PC-3 (cell line): ENCODE measurements at regions of chr7 and their contacts with region 1.

Region 1: DNA sequence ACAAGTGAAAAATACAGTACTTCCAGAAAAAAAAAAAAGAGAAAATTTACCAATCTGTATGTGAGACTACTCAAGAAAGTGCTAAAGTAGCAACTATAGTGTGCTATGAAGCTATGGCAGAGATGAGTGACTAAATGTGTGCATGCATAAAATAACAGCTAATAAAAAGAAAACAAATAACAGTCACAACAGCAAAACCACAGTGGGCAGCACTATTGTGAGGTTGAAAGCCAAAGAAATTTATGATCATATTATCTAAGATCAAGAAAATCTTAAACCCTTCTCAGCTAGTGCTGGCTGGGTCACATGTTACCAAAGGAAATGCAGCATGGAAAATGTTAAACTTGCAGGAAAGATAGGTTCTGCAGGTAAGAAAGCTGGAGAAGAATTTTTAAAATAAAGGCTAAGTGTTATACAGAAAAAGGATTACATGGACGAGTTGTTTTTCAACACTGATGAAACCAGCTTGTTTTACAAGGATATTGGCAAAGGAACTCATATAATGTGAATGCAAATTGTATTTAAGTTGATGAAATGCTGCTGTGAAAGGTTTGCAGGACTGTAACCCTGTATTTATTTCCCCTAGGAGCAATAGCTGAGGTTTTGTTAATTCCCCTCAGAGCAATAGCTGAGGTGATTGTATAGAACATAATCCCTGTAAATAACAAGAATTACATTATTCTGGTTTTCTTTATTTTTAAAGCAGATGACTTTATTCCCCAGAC is 15.6 kb upstream of the OR2A5 start:
- DNase-seq: peak; percentile 52
- ATAC-seq: peak; percentile 83
- H3K4me3 ChIP-seq: no peak overlapping the region
- H3K27ac ChIP-seq: peak overlapping the region; percentile 31; the same call in 1 of the 2 replicates
- H3K4me1 ChIP-seq: peaks cover 41% of the 10 kb centered on the region
- H3K27me3 ChIP-seq: no peaks in the 10 kb centered on the region
- CTCF ChIP-seq: no peak

Region 2: DNA sequence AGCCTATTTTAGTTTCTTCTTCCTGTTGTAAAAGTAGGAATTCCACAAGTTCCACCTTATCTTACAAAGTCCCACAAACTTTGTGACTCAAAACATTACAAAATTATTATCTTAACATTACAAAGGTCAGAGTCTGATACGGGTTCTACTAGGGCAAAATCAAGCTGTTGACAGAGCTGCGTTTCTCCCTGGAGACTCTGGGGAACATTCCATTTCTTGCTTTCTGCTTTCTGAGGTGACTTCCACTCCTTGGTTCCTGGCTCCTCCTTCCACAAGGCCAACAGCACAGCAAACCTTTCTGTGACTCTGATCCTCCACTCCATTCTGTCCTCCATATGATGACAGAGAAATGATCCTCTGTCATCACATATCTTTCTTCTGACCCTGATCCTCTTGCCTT is 67.9 kb before region 1 on chr7:
- CTCF ChIA-PET with region 1: no interaction called
- POLR2A ChIA-PET with region 1: no interaction called
- intact Hi-C with region 1: no loop called
- DNase-seq: no peak
- ATAC-seq: no peak
- H3K4me3 ChIP-seq: no peak overlapping the region
- H3K27ac ChIP-seq: no peak overlapping the region
- H3K4me1 ChIP-seq: 0 out of 2 replicates have a peak, but pooled peaks cover 5% of the 10 kb centered on the region
- H3K27me3 ChIP-seq: no peaks in the 10 kb centered on the region
- CTCF ChIP-seq: no peak

Region 3: GRCh38 chr7:144069953-144070352 is 36.8 kb after region 1 on chr7:
- CTCF ChIA-PET with region 1: no interaction called
- POLR2A ChIA-PET with region 1: no interaction called
- intact Hi-C with region 1: loop called (anchors 5 kb)
- DNase-seq: no peak
- ATAC-seq: no peak
- H3K4me3 ChIP-seq: no peak overlapping the region
- H3K27ac ChIP-seq: no peak overlapping the region
- H3K4me1 ChIP-seq: no peaks in the 10 kb centered on the region; the same call in 1 of the 2 replicates
- H3K27me3 ChIP-seq: peaks cover 12% of the 10 kb centered on the region
- CTCF ChIP-seq: no peak